PC-9 (cell line): ENCODE measurements at regions of chr7 and their contacts with region 1.

Region 1: GRCh38 chr7:28626624-28627262 is 214.4 kb downstream of the CREB5 start:
- DNase-seq: peak in 1 of 2 experiments; percentile 27
- H3K4me3 ChIP-seq: no peak overlapping the region
- H3K27ac ChIP-seq: no peak overlapping the region
- H3K4me1 ChIP-seq: peaks cover 21% of the 10 kb centered on the region
- H3K27me3 ChIP-seq: no peaks in the 10 kb centered on the region
- CTCF ChIP-seq: peak; percentile 92

Region 2: GRCh38 chr7:28069807-28070206 is 556.9 kb before region 1 on chr7:
- CTCF ChIA-PET with region 1: no interaction called
- POLR2A ChIA-PET with region 1: no interaction called
- intact Hi-C with region 1: no loop called
- DNase-seq: no peak
- H3K4me3 ChIP-seq: no peak overlapping the region
- H3K27ac ChIP-seq: no peak overlapping the region
- H3K4me1 ChIP-seq: peaks cover 21% of the 10 kb centered on the region
- H3K27me3 ChIP-seq: no peaks in the 10 kb centered on the region
- CTCF ChIP-seq: no peak

Region 3: DNA sequence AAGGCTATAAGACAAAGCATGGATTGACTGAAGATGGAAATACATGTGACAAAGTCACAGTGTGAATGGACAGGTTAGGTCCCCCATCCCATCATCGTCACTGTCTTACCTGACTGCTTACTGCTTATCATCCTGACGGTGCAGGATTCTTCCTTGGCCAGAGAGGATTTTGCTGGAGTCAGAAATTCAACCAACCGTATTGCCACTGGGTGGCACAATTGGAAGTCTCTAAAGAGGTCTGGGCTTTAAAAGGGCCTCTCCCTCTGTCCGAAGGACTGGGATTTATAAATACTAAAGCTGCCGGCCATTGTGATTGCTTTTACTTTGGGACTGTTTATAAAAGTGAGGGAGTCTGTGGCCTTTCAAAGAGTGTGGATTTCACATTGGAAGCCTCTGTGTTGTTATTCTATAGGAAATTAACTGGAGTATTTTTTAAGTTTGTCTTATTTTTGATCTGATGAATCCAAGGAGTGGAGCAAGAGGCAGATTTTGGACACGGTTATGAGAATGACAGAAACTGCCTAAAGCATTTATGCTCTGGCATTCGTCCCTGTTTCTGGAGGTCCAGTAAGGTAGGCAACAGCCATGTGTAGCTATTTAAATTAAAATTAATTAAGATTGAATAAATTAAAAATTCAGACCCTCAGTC is 327.7 kb before region 1 on chr7:
- CTCF ChIA-PET with region 1: no interaction called
- POLR2A ChIA-PET with region 1: no interaction called
- intact Hi-C with region 1: loop called (anchors 5 kb)
- DNase-seq: peak; percentile 27 to 52
- H3K4me3 ChIP-seq: no peak overlapping the region
- H3K27ac ChIP-seq: no peak overlapping the region
- H3K4me1 ChIP-seq: peaks cover 14% of the 10 kb centered on the region
- H3K27me3 ChIP-seq: no peaks in the 10 kb centered on the region
- CTCF ChIP-seq: peak; percentile 75

Region 4: GRCh38 chr7:28389504-28390395 is 237.0 kb before region 1 on chr7:
- CTCF ChIA-PET with region 1: no interaction called
- POLR2A ChIA-PET with region 1: no interaction called
- intact Hi-C with region 1: loop called (anchors 1 kb)
- DNase-seq: peak in 1 of 2 experiments; percentile 75
- H3K4me3 ChIP-seq: peak overlapping the region; percentile 53
- H3K27ac ChIP-seq: no peak overlapping the region
- H3K4me1 ChIP-seq: peaks cover 11% of the 10 kb centered on the region
- H3K27me3 ChIP-seq: no peaks in the 10 kb centered on the region
- CTCF ChIP-seq: peak; percentile 97

Region 5: DNA sequence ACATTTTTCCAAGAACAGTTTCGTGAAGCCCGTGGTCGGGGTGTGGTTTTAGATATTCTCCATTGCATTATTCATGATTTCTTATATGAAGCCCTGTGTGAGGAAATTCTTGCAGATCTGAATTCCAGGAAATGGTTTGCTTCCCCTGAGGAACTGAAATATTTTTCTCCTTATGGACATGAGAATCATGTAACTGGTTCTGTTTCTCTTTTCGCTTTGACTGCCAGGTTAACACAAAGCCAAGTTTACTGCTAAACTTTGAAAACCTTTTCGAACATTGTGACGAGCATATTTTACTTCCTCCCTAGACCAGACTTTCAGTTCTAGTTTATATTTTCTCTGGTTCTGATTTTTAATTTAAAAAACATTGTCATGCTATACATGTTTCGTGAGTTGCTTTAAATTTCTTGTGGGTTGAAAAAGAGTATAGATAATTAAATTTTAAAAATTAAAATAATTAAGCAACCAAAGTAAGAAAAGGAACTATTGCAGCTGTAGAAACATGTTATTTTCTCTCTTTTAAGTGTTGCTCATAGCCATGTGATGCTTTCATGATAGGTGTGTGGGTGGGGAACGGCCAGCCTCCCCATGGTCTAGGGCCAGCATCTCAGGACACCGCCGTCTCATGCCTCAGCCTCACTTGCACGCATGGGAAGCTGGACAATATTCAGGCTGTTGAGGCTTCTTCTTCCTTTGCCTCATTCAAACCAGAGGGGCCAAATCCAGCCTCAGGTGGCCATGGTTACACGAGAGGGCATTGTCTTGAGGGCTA is 117.3 kb before region 1 on chr7:
- CTCF ChIA-PET with region 1: no interaction called
- POLR2A ChIA-PET with region 1: no interaction called
- intact Hi-C with region 1: loop called (anchors 10 kb)
- DNase-seq: no peak
- H3K4me3 ChIP-seq: no peak overlapping the region
- H3K27ac ChIP-seq: no peak overlapping the region
- H3K4me1 ChIP-seq: no peaks in the 10 kb centered on the region
- H3K27me3 ChIP-seq: no peaks in the 10 kb centered on the region
- CTCF ChIP-seq: no peak

Region 6: GRCh38 chr7:28853834-28854749 is 227.3 kb after region 1 on chr7:
- CTCF ChIA-PET with region 1: no interaction called
- POLR2A ChIA-PET with region 1: no interaction called
- intact Hi-C with region 1: loop called (anchors 1 kb)
- DNase-seq: peak; percentile 48 to 79
- H3K4me3 ChIP-seq: peak overlapping the region; percentile 53
- H3K27ac ChIP-seq: no peak overlapping the region
- H3K4me1 ChIP-seq: peaks cover 16% of the 10 kb centered on the region
- H3K27me3 ChIP-seq: no peaks in the 10 kb centered on the region
- CTCF ChIP-seq: peak; percentile 87